ENCODE measurements at regions of chr12 and their contacts with region 1.

Region 1: GRCh38 chr12:68040450-68041075 is 51.3 kb downstream of the IFNG-AS1 start:
- DNase-seq: peak in 1 of 2 donors; percentile 47
- ATAC-seq: peak in 5 of 8 donors; percentile 58 to 89 (median 73)
- H3K4me3 ChIP-seq: no peak overlapping the region
- H3K27ac ChIP-seq: no peak overlapping the region
- H3K4me1 ChIP-seq: no peaks in the 10 kb centered on the region
- H3K27me3 ChIP-seq: no peaks in the 10 kb centered on the region
- CTCF ChIP-seq: peak; percentile 61 to 89 (median 86)

Region 2: GRCh38 chr12:68137335-68137830 is 96.8 kb after region 1 on chr12:
- intact Hi-C with region 1: no loop called
- DNase-seq: no peak
- ATAC-seq: no peak
- H3K4me3 ChIP-seq: no peak overlapping the region
- H3K27ac ChIP-seq: no peak overlapping the region
- H3K4me1 ChIP-seq: no peaks in the 10 kb centered on the region
- H3K27me3 ChIP-seq: peaks cover 0 to 3% (median 0%) of the 10 kb centered on the region in 7 donors
- CTCF ChIP-seq: no peak

Region 3: DNA sequence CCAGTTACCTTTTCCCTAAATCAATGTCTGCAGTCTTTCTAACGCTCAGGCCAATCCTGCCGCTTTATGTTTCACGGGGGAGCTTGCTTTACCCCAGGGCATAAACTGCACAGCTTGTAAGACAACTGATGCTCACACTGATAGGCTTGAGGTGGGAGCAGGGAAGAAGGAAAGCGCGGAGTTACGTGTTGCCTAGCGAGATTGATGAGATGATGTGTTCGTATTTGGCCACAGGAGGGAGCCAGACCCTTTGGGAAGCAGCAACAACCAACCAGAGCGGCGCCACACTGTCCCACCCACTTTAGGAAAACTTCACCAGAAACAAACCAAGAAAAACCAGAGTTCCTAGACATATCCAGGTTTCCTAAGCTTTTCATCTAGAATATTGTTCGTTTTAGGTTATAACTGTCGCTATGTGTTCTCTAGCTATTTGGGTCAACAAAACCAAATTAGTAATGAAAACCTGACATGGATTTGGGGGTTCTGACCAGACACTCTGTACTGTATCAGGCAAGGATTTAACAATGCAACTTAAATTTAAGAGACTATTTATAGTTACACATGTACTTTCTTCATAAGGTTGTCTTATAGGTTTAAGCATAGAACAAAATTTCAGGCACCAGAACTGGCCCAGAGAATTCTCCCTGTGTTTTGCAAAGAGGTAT is 182.7 kb after region 1 on chr12:
- intact Hi-C with region 1: loop called in 1 of 10 experiments (anchors 10 kb)
- DNase-seq: peak; percentile 55 to 81
- ATAC-seq: peak; percentile 91 to 99 (median 98)
- H3K4me3 ChIP-seq: peak overlapping the region in 1 of 10 donors; percentile 13
- H3K27ac ChIP-seq: peak overlapping the region in 1 of 10 donors; percentile 15
- H3K4me1 ChIP-seq: peaks cover 0 to 18% (median 3%) of the 10 kb centered on the region in 9 donors
- H3K27me3 ChIP-seq: peaks cover 0 to 11% (median 0%) of the 10 kb centered on the region in 7 donors
- CTCF ChIP-seq: peak; percentile 73 to 90 (median 85)

Region 4: GRCh38 chr12:68303850-68304249 is 263.3 kb after region 1 on chr12:
- intact Hi-C with region 1: loop called in 1 of 10 experiments (anchors 10 kb)
- DNase-seq: no peak
- ATAC-seq: peak in 3 of 8 donors; percentile 49 to 64 (median 61)
- H3K4me3 ChIP-seq: no peak overlapping the region
- H3K27ac ChIP-seq: peak overlapping the region in 1 of 10 donors; percentile 10
- H3K4me1 ChIP-seq: no peaks in the 10 kb centered on the region
- H3K27me3 ChIP-seq: no peaks in the 10 kb centered on the region
- CTCF ChIP-seq: no peak

Region 5: GRCh38 chr12:68310370-68310769 is 269.8 kb after region 1 on chr12:
- intact Hi-C with region 1: loop called in 7 of 10 experiments (anchors 5 to 10 kb)
- DNase-seq: no peak
- ATAC-seq: no peak
- H3K4me3 ChIP-seq: no peak overlapping the region
- H3K27ac ChIP-seq: no peak overlapping the region
- H3K4me1 ChIP-seq: no peaks in the 10 kb centered on the region
- H3K27me3 ChIP-seq: no peaks in the 10 kb centered on the region
- CTCF ChIP-seq: no peak

Region 6: GRCh38 chr12:68317047-68317667 is 276.6 kb after region 1 on chr12:
- intact Hi-C with region 1: loop called in 6 of 10 experiments (anchors 5 to 10 kb)
- DNase-seq: peak in 1 of 2 donors; percentile 42
- ATAC-seq: no peak
- H3K4me3 ChIP-seq: no peak overlapping the region
- H3K27ac ChIP-seq: no peak overlapping the region
- H3K4me1 ChIP-seq: peaks cover 0 to 16% (median 0%) of the 10 kb centered on the region in 9 donors
- H3K27me3 ChIP-seq: no peaks in the 10 kb centered on the region
- CTCF ChIP-seq: peak; percentile 42 to 85 (median 76)